ENCODE measurements at regions of chr13 and their contacts with region 1.

Region 1: GRCh38 chr13:73715114-73715910 is 418.9 kb downstream of the KLF12 start:
- DNase-seq: peak; percentile 76
- H3K4me3 Mint-ChIP-seq: peak overlapping the region; percentile 68
- H3K27ac Mint-ChIP-seq: peak overlapping the region; percentile 68
- H3K4me1 Mint-ChIP-seq: peaks cover 53% of the 10 kb centered on the region
- H3K27me3 Mint-ChIP-seq: no peaks in the 10 kb centered on the region

Region 2: GRCh38 chr13:72781451-72782439 is 933.6 kb before region 1 on chr13 and contains the starts of genes DIS3 and PIBF1:
- CTCF ChIA-PET with region 1: no interaction called
- intact Hi-C with region 1: loop called (anchors 10 kb)
- DNase-seq: peak; percentile 99
- H3K4me3 Mint-ChIP-seq: peak within 1 kb of the TSS; percentile 99
- H3K27ac Mint-ChIP-seq: peak within 1 kb of the TSS; percentile 99
- H3K4me1 Mint-ChIP-seq: peaks cover 55% of the 10 kb centered on the region
- H3K27me3 Mint-ChIP-seq: no peaks in the 10 kb centered on the region
- total RNA-seq, gene DIS3: 47.7 to 48.9 TPM
- total RNA-seq, gene PIBF1: 19.5 to 23.5 TPM

Region 3: DNA sequence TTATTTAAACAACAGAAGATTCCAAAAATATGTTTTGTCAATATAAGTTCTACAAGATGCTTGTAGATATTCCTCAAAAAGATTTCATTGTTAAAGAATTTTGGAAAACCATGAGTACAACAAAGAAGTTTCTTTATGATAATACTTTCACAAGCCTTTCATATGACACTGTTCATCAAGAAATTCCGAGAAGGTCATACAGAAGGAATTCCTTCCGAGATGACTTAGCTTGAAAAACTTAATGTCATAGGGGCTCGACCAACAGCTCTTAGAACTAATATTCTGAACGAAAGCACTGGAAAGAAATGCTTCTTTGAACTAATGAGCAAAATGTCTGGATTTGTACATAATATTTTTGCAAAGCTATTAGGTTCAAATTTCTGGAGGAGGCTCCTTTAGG is 253.1 kb before region 1 on chr13:
- CTCF ChIA-PET with region 1: no interaction called
- intact Hi-C with region 1: no loop called
- DNase-seq: no peak
- H3K4me3 Mint-ChIP-seq: no peak overlapping the region
- H3K27ac Mint-ChIP-seq: no peak overlapping the region
- H3K4me1 Mint-ChIP-seq: no peaks in the 10 kb centered on the region
- H3K27me3 Mint-ChIP-seq: no peaks in the 10 kb centered on the region

Region 4: DNA sequence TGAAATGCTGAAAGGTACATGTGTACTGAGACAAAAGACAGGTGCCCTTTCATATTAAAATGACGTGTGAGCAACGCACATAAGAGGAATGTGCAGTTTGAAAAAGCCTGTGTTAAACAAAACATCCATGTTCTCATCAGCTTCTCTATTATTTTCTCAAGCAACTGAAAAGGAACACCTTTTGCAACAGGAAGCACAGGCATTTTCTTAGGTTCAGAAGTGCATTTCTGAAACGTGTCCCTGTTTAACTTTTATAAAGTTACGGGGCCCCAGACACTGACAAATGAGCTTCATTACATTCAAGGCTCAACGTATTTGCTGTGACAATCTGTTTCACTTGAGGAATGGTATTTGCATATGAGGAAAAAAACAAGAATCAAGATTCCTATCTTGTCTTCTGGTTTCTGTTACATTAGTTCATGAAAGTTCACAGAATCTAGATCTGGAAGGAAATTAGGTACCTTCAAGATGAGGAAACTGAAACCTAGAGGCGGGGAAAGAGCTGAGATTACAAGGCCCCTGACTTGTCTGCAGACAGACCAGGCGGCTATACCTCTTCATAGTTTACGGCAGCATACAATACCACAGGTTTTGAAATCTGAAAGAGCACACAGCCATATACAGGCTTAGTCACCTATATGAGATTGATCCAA is 12.8 kb before region 1 on chr13:
- CTCF ChIA-PET with region 1: interaction called, 3 read pairs
- intact Hi-C with region 1: loop called (anchors 1 kb)
- DNase-seq: peak; percentile 61
- H3K4me3 Mint-ChIP-seq: peak overlapping the region; percentile 62
- H3K27ac Mint-ChIP-seq: peak overlapping the region; percentile 71
- H3K4me1 Mint-ChIP-seq: peaks cover 41% of the 10 kb centered on the region
- H3K27me3 Mint-ChIP-seq: no peaks in the 10 kb centered on the region

Region 5: DNA sequence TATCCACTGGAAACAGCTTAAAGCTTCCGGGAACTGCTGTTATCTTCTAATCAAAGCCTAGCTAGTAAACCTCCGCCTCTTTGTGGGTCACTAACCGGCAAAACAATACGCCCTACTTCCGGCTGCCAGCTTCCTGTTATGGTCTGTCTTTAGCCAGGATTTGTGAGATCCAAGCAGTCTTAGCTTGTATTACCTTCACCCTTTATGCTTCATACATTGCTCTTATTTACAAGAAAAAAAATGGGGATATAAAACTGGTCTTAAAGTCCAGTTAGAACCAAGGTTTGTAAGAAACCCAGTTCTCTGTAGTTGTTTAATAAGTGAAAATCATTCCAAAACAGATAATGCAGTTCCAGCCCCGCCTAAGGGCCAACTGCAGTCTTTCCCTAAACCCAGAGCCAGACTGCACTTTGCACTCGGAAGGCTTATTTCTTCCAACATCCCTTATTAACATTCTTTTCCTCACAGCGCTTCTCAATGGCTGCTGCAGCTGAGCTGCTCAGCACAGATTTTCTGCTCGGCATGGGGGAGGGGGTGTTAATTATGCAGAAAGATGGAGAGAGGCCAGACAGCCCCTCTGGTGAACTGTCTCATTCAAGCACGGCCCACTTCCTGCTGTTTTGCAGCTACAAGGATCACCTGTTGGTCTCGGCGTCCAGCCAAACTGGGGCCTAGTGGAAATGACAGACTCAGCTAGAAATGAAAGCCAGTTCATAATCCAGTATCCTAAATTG is 50.5 kb after region 1 on chr13:
- CTCF ChIA-PET with region 1: interaction called, 8 read pairs
- intact Hi-C with region 1: loop called (anchors 1 kb)
- DNase-seq: peak; percentile 95
- H3K4me3 Mint-ChIP-seq: peak overlapping the region; percentile 70
- H3K27ac Mint-ChIP-seq: peak overlapping the region; percentile 92
- H3K4me1 Mint-ChIP-seq: peaks cover 64% of the 10 kb centered on the region
- H3K27me3 Mint-ChIP-seq: no peaks in the 10 kb centered on the region

Region 6: DNA sequence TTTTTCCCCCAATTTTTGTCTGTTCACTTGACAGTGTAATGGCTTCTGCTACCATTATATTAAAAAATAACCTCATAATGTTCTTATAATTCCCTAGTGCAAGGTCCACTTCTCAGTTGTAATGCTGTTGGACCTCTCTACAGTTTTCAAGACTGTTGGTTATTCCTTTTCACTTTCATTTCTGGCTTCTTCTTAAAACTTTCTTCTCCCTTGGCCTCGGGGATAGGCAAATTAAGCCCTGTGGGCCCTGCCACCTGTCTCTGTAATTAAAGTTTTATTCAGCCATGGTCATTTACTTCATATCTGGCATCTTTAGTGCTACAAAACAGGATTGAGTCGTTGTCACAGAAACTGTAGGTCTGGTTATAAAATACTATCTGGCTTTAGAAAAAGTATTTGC is 105.4 kb after region 1 on chr13:
- CTCF ChIA-PET with region 1: no interaction called
- intact Hi-C with region 1: no loop called
- DNase-seq: no peak
- H3K4me3 Mint-ChIP-seq: no peak overlapping the region
- H3K27ac Mint-ChIP-seq: no peak overlapping the region
- H3K4me1 Mint-ChIP-seq: peaks cover 37% of the 10 kb centered on the region
- H3K27me3 Mint-ChIP-seq: no peaks in the 10 kb centered on the region

Region 7: GRCh38 chr13:73924607-73925006 is 209.3 kb after region 1 on chr13:
- CTCF ChIA-PET with region 1: no interaction called
- intact Hi-C with region 1: loop called (anchors 5 kb)
- DNase-seq: no peak
- H3K4me3 Mint-ChIP-seq: peak overlapping the region; percentile 8
- H3K27ac Mint-ChIP-seq: no peak overlapping the region
- H3K4me1 Mint-ChIP-seq: peaks cover 70% of the 10 kb centered on the region
- H3K27me3 Mint-ChIP-seq: no peaks in the 10 kb centered on the region

Region 8: DNA sequence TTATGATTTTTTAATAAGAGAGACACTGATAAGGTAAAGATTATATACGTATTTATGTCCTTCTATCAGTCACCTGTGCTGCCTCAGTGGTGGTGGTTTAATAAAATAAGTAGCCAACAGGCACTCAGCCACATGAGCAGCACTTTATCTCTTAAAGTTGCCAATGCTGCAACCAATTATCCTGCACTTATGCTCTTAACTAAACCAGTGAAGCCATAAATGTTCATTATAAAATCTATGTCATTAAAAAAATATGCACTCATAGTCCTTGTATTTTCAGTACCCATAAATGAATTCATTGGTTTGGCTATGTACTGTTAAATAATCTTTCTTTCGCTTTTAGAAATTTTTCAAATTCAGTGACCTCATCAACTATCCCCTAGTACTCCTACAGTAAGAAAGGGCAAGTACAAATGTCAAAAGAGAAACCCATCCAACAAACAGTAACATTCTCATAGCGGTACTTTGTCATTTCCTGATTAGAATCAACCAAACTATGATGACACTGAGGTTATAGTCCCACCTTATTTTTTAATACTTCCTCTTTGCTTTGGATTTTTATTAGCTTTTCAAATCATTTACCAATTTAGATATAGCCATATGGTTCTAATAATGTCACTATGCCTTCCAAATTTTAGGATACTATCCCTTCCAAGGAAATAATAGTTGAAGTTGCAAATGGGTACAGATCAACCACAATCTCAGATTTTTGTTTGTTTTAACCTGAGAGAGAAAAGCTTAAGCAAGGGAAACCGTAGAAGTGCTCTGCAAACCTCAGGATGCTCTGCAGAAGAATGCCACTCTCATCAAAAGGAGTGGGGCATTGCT is 228.0 kb after region 1 on chr13:
- CTCF ChIA-PET with region 1: no interaction called
- intact Hi-C with region 1: loop called (anchors 5 kb)
- DNase-seq: no peak
- H3K4me3 Mint-ChIP-seq: peak overlapping the region; percentile 33
- H3K27ac Mint-ChIP-seq: peak overlapping the region; percentile 74
- H3K4me1 Mint-ChIP-seq: peaks cover 74% of the 10 kb centered on the region
- H3K27me3 Mint-ChIP-seq: no peaks in the 10 kb centered on the region

Region 9: GRCh38 chr13:74230984-74231501 is 515.7 kb after region 1 on chr13:
- CTCF ChIA-PET with region 1: no interaction called
- intact Hi-C with region 1: loop called (anchors 5 kb)
- DNase-seq: no peak
- H3K4me3 Mint-ChIP-seq: peak overlapping the region; percentile 52
- H3K27ac Mint-ChIP-seq: peak overlapping the region; percentile 65
- H3K4me1 Mint-ChIP-seq: peaks cover 40% of the 10 kb centered on the region
- H3K27me3 Mint-ChIP-seq: no peaks in the 10 kb centered on the region

Measured in activated naive CD4-positive, alpha-beta T cell treated with anti-CD3 and anti-CD28 coated beads for 36 hours (primary cell).